ENCODE measurements at regions of chr19 and their contacts with region 1.

Region 1: GRCh38 chr19:34067861-34068271 is 104.4 kb upstream of the LSM14A start:
- DNase-seq: no peak

Region 2: DNA sequence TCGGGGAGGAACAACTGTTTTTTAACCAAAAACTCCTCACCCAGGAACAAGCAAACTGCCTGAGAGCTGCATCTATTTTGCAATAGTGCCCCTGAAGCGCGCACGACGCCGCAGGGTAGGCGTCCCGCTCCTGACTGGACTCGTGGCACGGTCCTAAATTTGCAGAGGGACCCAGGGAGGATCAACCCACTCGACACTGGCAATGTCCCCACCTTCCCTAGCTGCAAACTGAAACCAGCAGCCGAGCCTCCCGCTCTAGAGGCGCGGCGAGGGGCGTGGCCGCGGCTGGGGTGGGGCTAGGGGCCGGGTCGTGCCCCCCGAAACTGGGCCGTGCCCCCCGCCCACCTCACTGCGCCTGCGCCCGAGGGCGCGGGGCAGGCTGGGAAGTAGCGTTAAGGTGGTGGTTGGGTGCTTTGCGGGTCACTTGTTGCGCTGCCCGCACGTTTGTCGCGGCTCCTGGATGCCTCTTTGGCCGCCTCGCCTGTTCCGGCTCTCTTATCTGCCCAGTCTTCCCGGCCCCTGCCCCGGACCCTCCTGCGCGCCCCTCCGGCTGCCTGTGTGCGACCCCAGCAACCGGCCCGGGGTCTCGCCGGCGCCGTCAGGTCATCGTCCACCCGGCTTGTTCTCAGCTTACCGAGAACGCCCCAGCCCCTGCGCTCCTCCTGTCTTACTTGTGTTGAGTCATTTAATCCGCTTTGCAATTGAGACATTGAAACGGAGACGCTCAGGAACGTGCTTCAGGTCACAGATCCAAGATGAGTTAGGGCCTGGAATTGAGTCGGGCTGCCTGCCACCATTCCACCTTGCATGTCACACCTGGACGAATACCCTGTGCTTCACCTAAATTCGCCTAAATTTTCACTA is 66.6 kb after region 1 on chr19:
- intact Hi-C with region 1: loop called in 1 of 2 experiments (anchors 2 kb)
- DNase-seq: peak; percentile 95